ENCODE measurements at regions of chr1 and their contacts with region 1.

Region 1: GRCh38 chr1:21189906-21190500 is 13.3 kb upstream of the EIF4G3 start:
- DNase-seq: no peak
- ATAC-seq: no peak
- H3K4me3 ChIP-seq: no peak overlapping the region
- H3K27ac ChIP-seq: no peak overlapping the region
- H3K4me1 ChIP-seq: 0 out of 2 replicates have a peak, but pooled peaks cover 2% of the 10 kb centered on the region
- H3K27me3 ChIP-seq: no peaks in the 10 kb centered on the region
- CTCF ChIP-seq: no peak
- POLR2A ChIP-seq: no peak
- RAD21 ChIP-seq: no peak

Region 2: GRCh38 chr1:20521960-20522861 is 667.8 kb before region 1 on chr1:
- CTCF ChIA-PET with region 1: no interaction called
- POLR2A ChIA-PET with region 1: no interaction called
- dilution Hi-C with region 1: no loop called
- in situ Hi-C with region 1: no loop called
- intact Hi-C with region 1: loop called (anchors 10 kb)
- DNase-seq: peak; percentile 74
- ATAC-seq: peak; percentile 99
- H3K4me3 ChIP-seq: no peak overlapping the region; the same call in 1 of the 2 replicates
- H3K27ac ChIP-seq: no peak overlapping the region
- H3K4me1 ChIP-seq: no peaks in the 10 kb centered on the region
- H3K27me3 ChIP-seq: peaks cover 22% of the 10 kb centered on the region
- CTCF ChIP-seq: peak; percentile 97
- POLR2A ChIP-seq: 0 out of 2 replicates have a peak, but pooled peaks have one; percentile 29
- RAD21 ChIP-seq: peak; percentile 97

Region 3: GRCh38 chr1:20786253-20787028 is 403.6 kb before region 1 on chr1:
- CTCF ChIA-PET with region 1: interaction called, 4 read pairs
- POLR2A ChIA-PET with region 1: no interaction called
- dilution Hi-C with region 1: no loop called
- in situ Hi-C with region 1: loop called (anchors 10 kb)
- intact Hi-C with region 1: no loop called
- DNase-seq: peak; percentile 92
- ATAC-seq: peak; percentile 87
- H3K4me3 ChIP-seq: peak overlapping the region; percentile 85
- H3K27ac ChIP-seq: peak overlapping the region; percentile 92
- H3K4me1 ChIP-seq: peaks cover 2% of the 10 kb centered on the region; the same call in 1 of the 2 replicates
- H3K27me3 ChIP-seq: no peaks in the 10 kb centered on the region
- CTCF ChIP-seq: 0 out of 2 replicates have a peak, but pooled peaks have one; percentile 0
- POLR2A ChIP-seq: no peak; the same call in none of the 2 replicates
- RAD21 ChIP-seq: peak; percentile 1; the same call in 1 of the 2 replicates

Region 4: GRCh38 chr1:20949871-20950590 is 240.0 kb before region 1 on chr1:
- CTCF ChIA-PET with region 1: no interaction called
- POLR2A ChIA-PET with region 1: no interaction called
- dilution Hi-C with region 1: no loop called
- in situ Hi-C with region 1: no loop called
- intact Hi-C with region 1: loop called (anchors 10 kb)
- DNase-seq: no peak
- ATAC-seq: no peak
- H3K4me3 ChIP-seq: no peak overlapping the region
- H3K27ac ChIP-seq: no peak overlapping the region
- H3K4me1 ChIP-seq: no peaks in the 10 kb centered on the region
- H3K27me3 ChIP-seq: no peaks in the 10 kb centered on the region
- CTCF ChIP-seq: no peak
- POLR2A ChIP-seq: no peak
- RAD21 ChIP-seq: no peak

Region 5: GRCh38 chr1:20981915-20982314 is 208.1 kb before region 1 on chr1:
- CTCF ChIA-PET with region 1: interaction called, 9 read pairs
- POLR2A ChIA-PET with region 1: interaction called, 3 read pairs
- dilution Hi-C with region 1: no loop called
- in situ Hi-C with region 1: loop called (anchors 10 kb)
- intact Hi-C with region 1: loop called (anchors 5 kb)
- DNase-seq: peak; percentile 14
- ATAC-seq: peak; percentile 45; the same call in 1 of the 2 replicates
- H3K4me3 ChIP-seq: no peak overlapping the region
- H3K27ac ChIP-seq: no peak overlapping the region
- H3K4me1 ChIP-seq: peaks cover 8% of the 10 kb centered on the region
- H3K27me3 ChIP-seq: no peaks in the 10 kb centered on the region
- CTCF ChIP-seq: peak; percentile 32
- POLR2A ChIP-seq: no peak
- RAD21 ChIP-seq: no peak

Region 6: DNA sequence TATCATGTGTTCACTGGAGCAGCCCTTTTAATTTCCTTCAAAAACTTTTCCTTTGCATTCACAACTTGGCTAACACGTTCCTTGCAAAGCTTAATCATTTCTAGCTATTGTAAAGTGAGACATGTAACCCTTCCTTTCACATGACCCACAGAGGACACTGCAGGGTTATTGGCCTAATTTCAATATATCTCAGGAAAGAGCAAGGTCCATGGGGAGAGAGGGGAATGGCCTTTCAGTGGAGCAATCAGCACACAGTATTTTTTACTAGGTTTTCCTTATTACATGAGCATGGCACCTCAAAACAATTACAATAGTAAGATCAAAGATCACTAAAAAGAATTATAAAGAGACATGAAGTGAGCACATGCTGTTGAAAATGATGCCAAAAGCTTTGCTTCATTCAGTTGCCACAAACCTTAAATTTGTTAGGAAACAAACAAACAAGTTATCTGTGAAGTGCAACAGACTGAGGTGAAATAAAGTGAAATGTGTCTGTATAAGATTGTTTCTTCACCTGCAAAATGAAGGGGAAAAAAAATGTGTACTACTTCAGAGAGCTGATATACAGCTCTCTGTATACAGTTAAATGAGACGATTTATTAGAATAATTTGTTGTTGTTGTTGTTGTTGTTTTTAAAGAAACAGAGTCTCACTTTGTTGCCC is 74.8 kb before region 1 on chr1:
- CTCF ChIA-PET with region 1: interaction called, 18 read pairs
- POLR2A ChIA-PET with region 1: no interaction called
- dilution Hi-C with region 1: no loop called
- in situ Hi-C with region 1: no loop called
- intact Hi-C with region 1: no loop called
- DNase-seq: no peak
- ATAC-seq: no peak
- H3K4me3 ChIP-seq: no peak overlapping the region
- H3K27ac ChIP-seq: no peak overlapping the region
- H3K4me1 ChIP-seq: no peaks in the 10 kb centered on the region
- H3K27me3 ChIP-seq: no peaks in the 10 kb centered on the region
- CTCF ChIP-seq: no peak
- POLR2A ChIP-seq: no peak
- RAD21 ChIP-seq: no peak

Measured in IMR-90 (cell line).